ENCODE measurements at regions of chr16 and their contacts with region 1.

Region 1: GRCh38 chr16:4734063-4734729 is at the starts of genes ANKS3 and DNAAF8:
- DNase-seq: peak; percentile 98
- H3K4me3 Mint-ChIP-seq: peak within 1 kb of the TSS; percentile 98
- H3K27ac Mint-ChIP-seq: peak within 1 kb of the TSS; percentile 98
- H3K4me1 Mint-ChIP-seq: peaks cover 13% of the 10 kb centered on the region
- H3K27me3 Mint-ChIP-seq: no peaks in the 10 kb centered on the region
- CTCF ChIP-seq: no peak
- total RNA-seq, gene ANKS3: 29.9 and 35.0 TPM in 2 replicates
- total RNA-seq, gene DNAAF8: 0.56 and 1.6 TPM in 2 replicates

Region 2: DNA sequence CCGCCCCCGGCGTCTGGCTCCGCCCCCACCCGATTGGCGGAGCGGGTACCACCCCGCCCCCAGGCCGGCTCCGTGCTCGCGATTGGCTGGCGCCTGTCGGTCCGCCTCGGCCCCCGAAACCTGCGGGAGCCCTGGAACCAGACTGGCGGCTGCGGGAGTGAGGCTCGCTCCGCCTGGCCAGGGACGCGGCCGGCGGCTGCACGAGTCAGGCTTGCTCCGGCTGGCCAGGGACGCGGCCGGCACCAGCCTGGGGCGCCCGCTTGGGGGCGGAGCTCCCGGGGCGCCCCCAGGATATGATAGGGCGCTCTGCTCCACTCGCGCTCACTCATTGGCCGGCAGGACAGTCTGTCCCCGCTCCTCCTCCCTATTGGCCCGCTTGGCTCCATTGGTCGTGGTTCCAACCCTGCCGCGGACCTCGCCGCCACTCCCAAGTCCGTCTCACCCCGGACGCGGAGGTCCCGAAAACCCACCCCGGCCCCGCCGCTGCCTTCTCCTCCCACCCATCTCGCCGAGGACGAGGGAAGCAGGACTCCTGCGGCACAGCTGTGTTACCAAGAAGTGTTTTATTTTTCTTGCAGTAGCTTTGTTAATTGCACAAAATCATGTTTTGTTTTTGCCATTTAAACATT is 68.6 kb after region 1 on chr16:
- CTCF ChIA-PET with region 1: no interaction called
- POLR2A ChIA-PET with region 1: interaction called, 13 read pairs
- intact Hi-C with region 1: no loop called
- DNase-seq: peak; percentile 92
- H3K4me3 Mint-ChIP-seq: peak overlapping the region; percentile 76
- H3K27ac Mint-ChIP-seq: peak overlapping the region; percentile 27
- H3K4me1 Mint-ChIP-seq: peaks cover 6% of the 10 kb centered on the region
- H3K27me3 Mint-ChIP-seq: no peaks in the 10 kb centered on the region
- CTCF ChIP-seq: no peak

Region 3: GRCh38 chr16:5166486-5166885 is 432.3 kb after region 1 on chr16:
- CTCF ChIA-PET with region 1: no interaction called
- POLR2A ChIA-PET with region 1: no interaction called
- intact Hi-C with region 1: no loop called
- DNase-seq: no peak
- H3K4me3 Mint-ChIP-seq: no peak overlapping the region
- H3K27ac Mint-ChIP-seq: no peak overlapping the region
- H3K4me1 Mint-ChIP-seq: no peaks in the 10 kb centered on the region
- H3K27me3 Mint-ChIP-seq: no peaks in the 10 kb centered on the region
- CTCF ChIP-seq: no peak

Measured in MCF 10A (cell line).